ENCODE measurements at regions of chr5 and their contacts with region 1.

Region 1: GRCh38 chr5:175534070-175534932 is 55.9 kb downstream of the SFXN1 start:
- DNase-seq: peak; percentile 80 to 83
- ATAC-seq: peak; percentile 95 to 99
- H3K4me3 ChIP-seq: no peak overlapping the region
- H3K27ac ChIP-seq: no peak overlapping the region
- H3K4me1 ChIP-seq: peaks cover 3% of the 10 kb centered on the region; the same call in 1 of the 3 replicates
- CTCF ChIP-seq: peak; percentile 98
- EP300 ChIP-seq: no peak
- POLR2A ChIP-seq: no peak
- RAD21 ChIP-seq: peak; percentile 92 to 98

Region 2: GRCh38 chr5:175517818-175518450 is 16.4 kb before region 1 on chr5:
- CTCF ChIA-PET with region 1: interaction called, 50 read pairs
- POLR2A ChIA-PET with region 1: no interaction called
- DNase-seq: no peak
- ATAC-seq: no peak
- H3K4me3 ChIP-seq: no peak overlapping the region
- H3K27ac ChIP-seq: no peak overlapping the region
- H3K4me1 ChIP-seq: no peaks in the 10 kb centered on the region
- CTCF ChIP-seq: no peak
- EP300 ChIP-seq: no peak
- POLR2A ChIP-seq: no peak
- RAD21 ChIP-seq: no peak

Region 3: DNA sequence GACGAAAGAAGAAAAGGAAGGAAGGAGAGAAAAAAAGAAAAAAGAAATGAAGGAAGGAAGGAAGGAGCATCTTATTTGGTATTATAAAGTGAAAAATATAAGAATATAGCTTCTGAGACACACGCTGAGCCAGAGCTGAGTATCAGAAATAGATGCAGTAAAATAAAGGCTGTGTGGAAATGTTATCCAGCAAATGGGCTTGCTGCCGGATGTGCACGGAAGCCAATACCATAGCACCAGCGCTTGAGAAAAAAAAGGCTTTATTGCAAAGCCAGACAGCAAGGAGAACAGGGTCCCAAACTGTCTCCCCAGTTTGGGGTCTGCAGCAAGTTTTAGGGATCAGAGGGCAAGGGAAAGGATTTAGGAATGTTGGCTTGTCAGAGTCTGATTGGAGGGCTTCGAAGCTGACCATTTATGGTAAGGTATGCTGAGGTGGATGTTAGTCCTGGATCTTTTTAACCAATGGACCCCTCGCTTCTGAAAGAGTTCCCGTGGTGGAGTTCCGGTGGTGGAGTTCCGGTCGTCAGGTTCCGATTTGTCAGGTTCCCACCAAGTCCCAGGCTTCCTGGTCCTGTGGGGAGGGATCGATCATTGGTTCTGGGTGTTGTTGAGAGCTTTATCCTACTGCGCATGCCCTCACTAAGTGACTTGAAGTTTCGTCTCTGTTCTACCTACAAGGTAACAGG is 14.5 kb after region 1 on chr5:
- CTCF ChIA-PET with region 1: interaction called, 22 read pairs
- POLR2A ChIA-PET with region 1: no interaction called
- DNase-seq: no peak
- ATAC-seq: no peak
- H3K4me3 ChIP-seq: no peak overlapping the region
- H3K27ac ChIP-seq: no peak overlapping the region
- H3K4me1 ChIP-seq: no peaks in the 10 kb centered on the region
- CTCF ChIP-seq: no peak
- EP300 ChIP-seq: no peak
- POLR2A ChIP-seq: no peak
- RAD21 ChIP-seq: no peak

Region 4: DNA sequence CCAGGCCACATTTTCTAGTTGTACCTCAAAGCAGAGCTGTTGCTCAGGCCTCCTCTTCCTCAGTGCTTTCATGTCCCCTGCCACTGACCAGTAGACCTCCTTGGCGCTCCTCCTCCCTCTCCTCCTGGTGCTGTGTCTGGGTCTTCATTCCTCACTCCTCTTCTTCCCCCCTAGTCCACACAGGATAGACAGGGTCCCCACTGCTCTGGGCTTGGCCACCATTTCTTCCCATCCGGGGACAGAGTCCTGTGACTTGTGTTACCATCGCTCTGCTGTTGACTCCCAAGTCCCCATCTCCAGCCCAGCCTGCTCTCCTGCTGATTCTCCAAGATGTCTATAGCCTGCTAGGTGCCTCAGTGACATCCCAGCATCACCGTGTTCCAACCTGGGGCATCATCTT is 35.4 kb after region 1 on chr5:
- CTCF ChIA-PET with region 1: interaction called, 16 read pairs
- POLR2A ChIA-PET with region 1: no interaction called
- DNase-seq: no peak
- ATAC-seq: no peak
- H3K4me3 ChIP-seq: no peak overlapping the region
- H3K27ac ChIP-seq: no peak overlapping the region
- H3K4me1 ChIP-seq: no peaks in the 10 kb centered on the region
- CTCF ChIP-seq: no peak
- EP300 ChIP-seq: no peak
- POLR2A ChIP-seq: no peak
- RAD21 ChIP-seq: no peak

Region 5: GRCh38 chr5:175700991-175701390 is 166.7 kb after region 1 on chr5:
- CTCF ChIA-PET with region 1: interaction called, 11 read pairs
- POLR2A ChIA-PET with region 1: no interaction called
- DNase-seq: peak; percentile 25 to 40
- ATAC-seq: peak in 1 of 2 experiments; percentile 60; a peak in 2 of 6 replicates
- H3K4me3 ChIP-seq: no peak overlapping the region
- H3K27ac ChIP-seq: no peak overlapping the region
- H3K4me1 ChIP-seq: no peaks in the 10 kb centered on the region
- CTCF ChIP-seq: peak; percentile 37
- EP300 ChIP-seq: no peak
- POLR2A ChIP-seq: no peak
- RAD21 ChIP-seq: peak; percentile 29 to 41; a peak in 3 of 5 replicates

Region 6: GRCh38 chr5:175709276-175709781 is 175.0 kb after region 1 on chr5:
- CTCF ChIA-PET with region 1: interaction called, 15 read pairs
- POLR2A ChIA-PET with region 1: no interaction called
- DNase-seq: no peak
- ATAC-seq: no peak
- H3K4me3 ChIP-seq: no peak overlapping the region
- H3K27ac ChIP-seq: no peak overlapping the region
- H3K4me1 ChIP-seq: no peaks in the 10 kb centered on the region
- CTCF ChIP-seq: no peak
- EP300 ChIP-seq: no peak
- POLR2A ChIP-seq: no peak
- RAD21 ChIP-seq: no peak

Region 7: DNA sequence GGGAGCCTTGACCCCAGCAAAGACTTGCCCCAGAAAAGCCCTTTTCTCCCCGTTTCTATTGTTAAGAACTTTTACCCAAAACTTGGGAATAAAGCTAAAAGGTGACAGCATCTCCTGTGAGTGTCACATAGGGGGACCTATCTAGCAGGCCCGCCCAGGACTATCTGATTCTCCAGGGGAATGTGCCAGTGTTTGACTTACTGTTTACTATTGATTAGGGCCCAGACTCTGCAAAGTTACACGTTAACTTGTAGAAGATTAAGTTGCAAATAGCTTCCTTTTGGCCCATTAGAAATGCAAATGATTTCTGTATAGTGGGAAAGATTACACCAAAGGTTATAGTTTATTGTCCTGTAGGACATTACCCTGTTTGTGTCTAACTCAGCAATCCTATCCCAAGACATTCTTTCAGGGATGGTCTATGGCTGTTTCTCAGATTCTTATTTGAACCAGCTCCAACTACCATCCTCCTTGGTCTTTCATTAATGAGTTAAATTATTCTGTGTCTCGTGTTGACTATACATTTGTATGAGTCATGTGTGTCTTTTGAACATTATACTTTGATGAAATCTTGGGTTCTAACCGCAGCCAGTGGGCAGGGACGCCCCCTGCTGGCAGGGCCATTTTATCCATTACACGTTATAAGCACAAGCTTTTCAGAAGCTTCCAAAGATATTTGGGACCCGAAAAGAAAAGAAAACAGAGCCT is 184.3 kb after region 1 on chr5:
- CTCF ChIA-PET with region 1: interaction called, 38 read pairs
- POLR2A ChIA-PET with region 1: no interaction called
- DNase-seq: peak in 1 of 2 experiments; percentile 42
- ATAC-seq: peak in 1 of 2 experiments; percentile 55; a peak in 1 of 6 replicates
- H3K4me3 ChIP-seq: no peak overlapping the region
- H3K27ac ChIP-seq: no peak overlapping the region
- H3K4me1 ChIP-seq: no peaks in the 10 kb centered on the region
- CTCF ChIP-seq: peak; percentile 67
- EP300 ChIP-seq: no peak
- POLR2A ChIP-seq: no peak
- RAD21 ChIP-seq: peak; percentile 59 to 66; a peak in 4 of 5 replicates

Region 8: GRCh38 chr5:176373100-176373818 is 839.0 kb after region 1 on chr5:
- CTCF ChIA-PET with region 1: no interaction called
- POLR2A ChIA-PET with region 1: no interaction called
- DNase-seq: no peak
- ATAC-seq: no peak
- H3K4me3 ChIP-seq: no peak overlapping the region
- H3K27ac ChIP-seq: no peak overlapping the region
- H3K4me1 ChIP-seq: no peaks in the 10 kb centered on the region
- CTCF ChIP-seq: no peak
- EP300 ChIP-seq: no peak
- POLR2A ChIP-seq: no peak
- RAD21 ChIP-seq: no peak